A549 (cell line): ENCODE measurements at regions of chr15 and their contacts with region 1.

Region 1: DNA sequence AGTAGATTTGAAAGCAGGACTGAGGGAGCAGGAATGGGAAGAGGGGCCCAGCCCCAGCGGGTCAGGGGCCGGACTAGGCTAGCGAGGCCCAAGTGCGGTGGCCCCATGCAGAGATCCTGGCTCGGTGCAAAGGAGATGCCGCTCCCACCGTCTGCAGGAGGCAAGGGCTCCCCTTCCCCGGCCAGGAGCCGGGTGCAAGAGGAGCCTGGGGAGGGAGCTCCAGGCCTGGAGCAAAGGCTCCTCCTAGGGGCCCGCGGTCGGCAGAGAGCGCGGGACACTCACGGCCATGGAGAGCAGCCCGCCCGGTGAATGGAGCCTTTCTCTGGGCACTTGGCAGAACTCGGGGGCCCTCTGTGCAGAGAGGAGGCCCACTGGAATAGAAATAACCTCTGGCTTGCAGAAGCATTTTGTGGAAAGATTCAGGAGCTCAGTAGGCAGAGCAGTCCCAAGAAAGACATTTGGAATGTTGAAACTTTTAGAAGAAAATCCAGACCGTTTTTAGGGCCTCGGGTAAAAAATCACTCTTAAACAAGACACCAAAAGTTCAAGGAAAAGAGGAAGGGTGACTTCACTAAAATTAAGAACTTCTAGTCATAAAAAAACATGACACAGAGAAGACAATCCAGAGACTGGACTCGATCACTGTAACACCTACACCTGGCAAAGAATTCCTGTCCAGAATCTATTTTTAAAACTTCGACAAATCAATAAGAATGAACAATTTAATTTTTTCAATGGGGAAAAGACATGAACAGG is 43.0 kb upstream of the USP3 start:
- DNase-seq: no peak
- ATAC-seq: peak in 1 of 2 experiments; percentile 57; a peak in 3 of 6 replicates
- H3K4me3 ChIP-seq: no peak overlapping the region
- H3K27ac ChIP-seq: peak overlapping the region; percentile 61 to 64
- H3K4me1 ChIP-seq: peaks cover 53% of the 10 kb centered on the region
- CTCF ChIP-seq: peak; percentile 18; the same call in 1 of the 3 replicates
- EP300 ChIP-seq: no peak
- POLR2A ChIP-seq: no peak
- RAD21 ChIP-seq: peak; percentile 51 to 52; a peak in 4 of 5 replicates

Region 2: DNA sequence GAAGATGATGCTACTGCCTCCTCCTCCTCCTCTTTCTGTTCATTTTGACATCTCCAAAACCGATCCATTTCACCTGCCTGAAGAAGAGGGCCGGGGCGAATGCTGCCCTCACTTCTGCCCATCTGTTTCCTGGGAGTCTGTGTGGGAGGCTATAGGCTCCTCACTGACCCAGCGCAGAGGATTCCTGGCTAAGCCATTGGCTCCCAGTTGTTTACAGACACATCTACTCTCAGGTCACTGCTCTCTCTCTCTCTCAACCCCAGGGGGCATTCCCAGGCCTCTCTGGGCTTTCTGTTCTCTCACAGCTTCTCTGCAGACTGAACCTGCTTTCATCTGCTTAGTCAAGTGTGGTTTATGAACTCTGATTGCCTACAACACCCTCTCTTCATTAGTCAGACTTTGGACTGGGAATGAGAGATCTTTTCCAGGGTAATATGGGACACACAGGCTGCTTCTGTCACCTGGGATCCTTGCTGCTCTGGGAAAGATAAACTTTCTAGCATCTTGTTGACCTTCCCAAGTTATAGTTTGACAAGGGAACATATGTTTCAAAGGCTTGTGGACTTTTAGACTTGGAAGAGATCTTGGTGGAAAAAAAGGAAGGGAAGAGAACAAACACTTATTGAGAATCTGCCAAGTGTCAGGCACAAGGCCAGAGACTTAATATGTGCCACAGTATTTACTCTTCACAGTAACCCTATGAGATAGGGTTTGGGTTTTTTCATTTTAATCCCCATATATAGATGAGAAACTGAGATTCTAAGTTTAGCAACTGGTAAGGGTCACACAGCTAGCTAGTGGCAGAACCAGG is 12.8 kb after region 1 on chr15:
- CTCF ChIA-PET with region 1: interaction called, 66 read pairs
- POLR2A ChIA-PET with region 1: no interaction called
- DNase-seq: peak in 1 of 2 experiments; percentile 95
- ATAC-seq: peak; percentile 82
- H3K4me3 ChIP-seq: no peak overlapping the region
- H3K27ac ChIP-seq: peak overlapping the region; percentile 81 to 90
- H3K4me1 ChIP-seq: peaks cover 59% of the 10 kb centered on the region
- CTCF ChIP-seq: no peak
- EP300 ChIP-seq: peak; percentile 24 to 45; a peak in 3 of 5 replicates
- POLR2A ChIP-seq: no peak
- RAD21 ChIP-seq: peak; percentile 25 to 43; a peak in 2 of 5 replicates